ENCODE measurements at regions of chr10 and their contacts with region 1.

Region 1: DNA sequence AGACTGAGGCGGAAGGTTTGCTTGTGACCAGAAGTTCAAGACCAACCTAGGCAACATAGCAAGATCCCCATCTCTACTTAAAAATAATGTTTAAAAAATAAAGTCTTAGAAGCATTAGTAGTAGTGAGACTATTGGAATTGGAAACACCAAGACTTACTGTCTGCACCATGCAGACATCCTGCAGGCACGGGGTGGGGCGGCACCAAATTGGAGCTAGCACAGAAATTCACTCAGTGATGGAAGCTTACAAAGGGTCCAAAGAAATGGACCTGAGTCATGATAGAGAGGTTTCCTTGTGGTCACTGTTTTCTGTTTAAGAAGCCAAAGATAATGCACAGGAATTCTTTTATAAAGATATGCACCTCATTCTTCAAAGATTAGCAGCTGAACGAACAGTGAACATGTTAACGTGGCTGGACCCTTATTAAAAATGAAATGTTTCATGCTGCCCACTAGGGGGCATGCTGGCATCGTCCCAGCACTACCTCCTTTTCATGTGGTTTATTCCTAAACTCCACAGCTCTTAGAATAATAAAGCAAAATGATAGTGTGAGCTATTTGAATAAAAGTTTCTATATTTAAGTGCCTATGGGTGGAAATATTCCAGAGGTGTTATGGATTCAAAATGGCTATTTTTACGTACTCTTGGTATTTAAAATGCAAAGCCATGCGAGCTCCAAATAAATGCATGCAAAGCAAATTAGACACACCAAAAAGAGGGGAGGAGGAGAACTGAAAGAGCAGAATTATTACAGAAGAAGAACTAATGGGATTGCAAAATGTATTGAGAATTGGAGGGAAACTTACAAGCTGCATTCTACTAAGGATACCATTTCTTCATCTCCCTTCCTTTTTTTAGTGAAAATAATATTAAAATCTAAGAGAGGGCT is 28.6 kb downstream of the PDSS1 start:
- DNase-seq: peak; percentile 18 to 63
- ATAC-seq: peak; percentile 89; a peak in 5 of 6 replicates
- H3K4me3 ChIP-seq: no peak overlapping the region
- H3K27ac ChIP-seq: no peak overlapping the region
- H3K4me1 ChIP-seq: 0 out of 3 replicates have a peak, but pooled peaks cover 5% of the 10 kb centered on the region
- CTCF ChIP-seq: peak; percentile 93
- EP300 ChIP-seq: no peak
- POLR2A ChIP-seq: no peak
- RAD21 ChIP-seq: peak; percentile 86 to 88

Region 2: GRCh38 chr10:26706206-26706605 is 19.9 kb before region 1 on chr10:
- CTCF ChIA-PET with region 1: interaction called, 27 read pairs
- POLR2A ChIA-PET with region 1: no interaction called
- DNase-seq: no peak
- ATAC-seq: no peak
- H3K4me3 ChIP-seq: no peak overlapping the region
- H3K27ac ChIP-seq: no peak overlapping the region
- H3K4me1 ChIP-seq: no peaks in the 10 kb centered on the region; the same call in 2 of the 3 replicates
- CTCF ChIP-seq: no peak
- EP300 ChIP-seq: no peak
- POLR2A ChIP-seq: no peak
- RAD21 ChIP-seq: no peak

Region 3: DNA sequence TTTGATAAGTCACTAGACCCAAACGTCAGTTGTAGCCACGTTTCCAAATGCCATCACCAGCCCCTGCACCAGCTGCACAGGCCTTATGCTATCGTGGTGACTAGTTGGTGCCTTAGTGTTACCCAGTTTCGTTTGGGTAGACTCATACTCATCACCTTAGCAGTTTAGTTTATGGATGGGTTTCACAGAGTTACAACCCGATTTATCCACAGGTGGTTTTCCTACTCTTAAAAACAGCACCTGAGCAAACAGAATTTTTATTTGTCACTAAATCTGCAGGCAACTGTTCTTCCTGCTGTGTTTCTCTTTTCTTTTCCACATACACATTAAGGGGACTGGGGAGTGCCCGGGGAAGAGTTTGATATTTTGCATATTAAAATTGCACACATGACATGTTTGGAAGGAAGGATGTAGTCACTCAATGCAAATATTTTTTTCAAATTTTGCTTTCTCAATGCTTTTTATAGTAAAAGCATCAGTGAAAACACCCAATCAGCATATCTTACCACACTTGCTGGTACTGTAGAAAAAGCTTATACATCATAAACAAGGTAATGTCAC is 13.1 kb after region 1 on chr10:
- CTCF ChIA-PET with region 1: interaction called, 20 read pairs
- POLR2A ChIA-PET with region 1: no interaction called
- DNase-seq: no peak
- ATAC-seq: no peak
- H3K4me3 ChIP-seq: no peak overlapping the region
- H3K27ac ChIP-seq: no peak overlapping the region
- H3K4me1 ChIP-seq: no peaks in the 10 kb centered on the region
- CTCF ChIP-seq: no peak
- EP300 ChIP-seq: no peak
- POLR2A ChIP-seq: no peak
- RAD21 ChIP-seq: no peak

Region 4: DNA sequence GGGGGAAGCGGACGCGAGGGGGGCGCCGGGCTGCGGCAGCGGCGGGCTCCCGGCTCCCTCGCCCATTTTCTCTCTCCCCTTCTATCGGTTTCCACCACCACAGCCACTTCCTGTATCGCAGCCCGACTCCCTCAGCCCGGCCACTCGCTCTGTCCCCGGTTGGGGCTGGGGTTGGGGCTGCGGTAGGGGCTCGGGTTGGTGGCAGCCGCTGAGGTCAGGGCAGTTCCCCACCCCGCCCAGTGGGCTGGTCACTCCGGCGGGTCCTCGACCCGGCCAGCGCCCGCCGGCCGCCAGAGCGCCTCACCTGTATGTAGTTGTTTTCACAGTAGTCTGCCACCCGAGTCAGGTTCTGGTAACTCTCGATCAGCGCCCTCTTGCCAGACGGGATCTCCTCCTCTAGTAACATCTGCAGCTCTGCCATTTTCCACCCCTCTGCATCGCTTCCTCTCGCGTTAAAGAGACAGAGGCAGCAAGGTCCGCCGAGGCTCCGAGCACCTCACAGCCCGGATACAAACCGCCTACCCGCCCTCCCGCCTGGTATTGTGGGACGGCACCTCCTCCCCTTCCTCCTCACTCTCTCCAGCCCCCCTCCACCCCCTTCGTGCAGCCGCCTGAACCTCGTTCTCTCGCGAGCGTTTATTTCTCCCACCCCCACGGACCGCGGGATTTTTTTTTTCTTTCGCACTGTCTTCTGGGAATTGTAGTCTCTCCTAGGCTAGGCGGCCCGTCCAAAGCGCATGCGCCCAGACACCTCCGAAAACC is 134.5 kb after region 1 on chr10 and contains the start of gene ABI1:
- CTCF ChIA-PET with region 1: interaction called, 19 read pairs
- POLR2A ChIA-PET with region 1: interaction called, 4 read pairs
- DNase-seq: peak; percentile 77 to 98
- ATAC-seq: peak; percentile 96 to 97
- H3K4me3 ChIP-seq: peak within 1 kb of the TSS; percentile 96
- H3K27ac ChIP-seq: peak within 1 kb of the TSS; percentile 74 to 94
- H3K4me1 ChIP-seq: peaks cover 16% of the 10 kb centered on the region
- CTCF ChIP-seq: no peak
- EP300 ChIP-seq: no peak
- POLR2A ChIP-seq: peak; percentile 87
- RAD21 ChIP-seq: no peak
- polyA plus RNA-seq, gene ABI1: 56.3 and 67.6 TPM in 2 replicates

Region 5: DNA sequence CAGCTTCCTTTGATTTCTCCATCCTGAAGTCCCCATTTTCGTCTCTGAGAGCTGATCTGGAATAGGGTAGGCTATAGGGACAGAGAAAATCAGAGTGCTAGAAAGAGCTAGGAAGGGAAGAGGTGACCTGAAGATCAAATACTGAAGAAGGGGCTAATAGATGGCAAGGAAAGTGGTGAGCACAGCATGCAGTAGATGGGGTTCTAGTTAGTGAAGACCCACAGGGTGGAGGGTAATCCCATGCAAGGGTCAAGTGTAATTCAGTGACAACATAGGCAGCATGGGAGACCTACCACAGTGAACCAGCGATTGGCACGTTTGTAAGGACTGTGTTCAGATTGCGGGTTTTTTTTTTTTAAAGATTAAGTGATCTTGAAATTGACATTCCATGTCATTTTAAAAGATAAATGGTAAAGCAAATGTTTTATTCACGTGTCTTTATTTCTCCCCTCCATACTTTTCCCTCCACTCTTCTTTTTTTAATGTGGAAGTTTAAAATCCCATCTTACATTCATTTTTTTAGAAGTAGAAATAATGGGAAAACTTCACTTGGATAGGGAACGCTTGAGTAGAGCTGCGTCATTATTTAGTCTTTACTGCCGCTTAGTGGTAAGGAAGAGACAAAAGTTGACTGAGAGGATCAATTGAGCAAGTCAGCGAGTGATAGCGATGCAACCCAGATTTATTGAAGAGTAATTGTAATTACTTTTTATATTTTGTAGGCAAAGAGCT is 155.7 kb after region 1 on chr10:
- CTCF ChIA-PET with region 1: interaction called, 160 read pairs
- POLR2A ChIA-PET with region 1: interaction called, 8 read pairs
- DNase-seq: peak; percentile 55 to 77
- ATAC-seq: peak; percentile 91 to 97
- H3K4me3 ChIP-seq: no peak overlapping the region
- H3K27ac ChIP-seq: no peak overlapping the region
- H3K4me1 ChIP-seq: 0 out of 3 replicates have a peak, but pooled peaks cover 3% of the 10 kb centered on the region
- CTCF ChIP-seq: peak; percentile 90
- EP300 ChIP-seq: no peak
- POLR2A ChIP-seq: no peak
- RAD21 ChIP-seq: peak; percentile 92 to 95